ENCODE measurements at regions of chr1 and their contacts with region 1.

Region 1: DNA sequence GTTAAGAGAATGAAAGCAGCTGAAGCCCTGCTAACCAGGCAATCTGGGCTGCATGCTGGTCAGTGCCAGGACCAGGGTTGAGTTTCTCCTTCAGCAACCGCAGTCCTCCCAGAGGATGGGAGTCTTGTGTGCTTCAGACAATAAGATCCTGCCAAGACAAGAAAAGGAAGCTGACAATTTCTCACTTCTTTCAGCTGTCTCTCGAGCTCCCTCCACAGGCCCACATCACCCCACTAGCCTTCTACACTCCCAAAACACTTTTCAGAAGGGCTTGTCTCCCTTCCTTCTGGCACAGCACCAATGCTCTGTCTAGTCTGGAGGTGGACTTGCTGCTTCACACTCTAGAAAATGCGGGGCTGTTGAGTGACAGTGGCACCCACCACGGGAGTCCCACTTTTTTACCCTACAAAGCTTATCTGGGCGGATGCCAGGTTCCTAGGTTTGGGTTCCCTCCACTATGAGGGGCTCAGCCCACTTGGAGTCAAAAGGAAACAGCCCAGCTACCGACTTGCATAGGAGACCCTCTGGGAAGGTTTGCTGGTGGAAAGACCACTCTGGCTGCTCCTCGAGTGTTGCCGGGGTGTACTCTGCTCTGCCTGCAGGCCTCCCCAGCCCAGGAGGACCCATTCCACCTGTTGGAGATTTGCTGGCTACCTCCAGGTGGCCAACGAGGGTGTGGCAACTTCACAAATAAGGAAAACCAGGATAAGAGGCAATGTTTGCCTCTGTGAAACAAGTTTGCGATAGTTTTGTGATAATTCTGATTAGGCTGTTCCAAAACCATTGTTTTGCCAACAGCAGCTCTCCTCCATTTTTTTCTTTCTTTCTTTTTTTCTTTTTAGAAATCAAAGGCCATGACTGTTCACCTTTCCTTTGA is 68.9 kb downstream of the TENT5C start:
- ATAC-seq: peak in 3 of 8 experiments; percentile 8 to 73 (median 36)
- H3K4me3 ChIP-seq: no peak overlapping the region
- H3K27ac ChIP-seq: no peak overlapping the region
- H3K4me1 ChIP-seq: no peaks in the 10 kb centered on the region

Region 2: GRCh38 chr1:117527566-117528102 is 147.1 kb before region 1 on chr1:
- in situ Hi-C with region 1: loop called in 2 of 9 experiments (anchors 10 to 25 kb)
- ATAC-seq: peak in 2 of 8 experiments; percentile 23 to 46
- H3K4me3 ChIP-seq: no peak overlapping the region
- H3K27ac ChIP-seq: no peak overlapping the region
- H3K4me1 ChIP-seq: no peaks in the 10 kb centered on the region

Region 3: DNA sequence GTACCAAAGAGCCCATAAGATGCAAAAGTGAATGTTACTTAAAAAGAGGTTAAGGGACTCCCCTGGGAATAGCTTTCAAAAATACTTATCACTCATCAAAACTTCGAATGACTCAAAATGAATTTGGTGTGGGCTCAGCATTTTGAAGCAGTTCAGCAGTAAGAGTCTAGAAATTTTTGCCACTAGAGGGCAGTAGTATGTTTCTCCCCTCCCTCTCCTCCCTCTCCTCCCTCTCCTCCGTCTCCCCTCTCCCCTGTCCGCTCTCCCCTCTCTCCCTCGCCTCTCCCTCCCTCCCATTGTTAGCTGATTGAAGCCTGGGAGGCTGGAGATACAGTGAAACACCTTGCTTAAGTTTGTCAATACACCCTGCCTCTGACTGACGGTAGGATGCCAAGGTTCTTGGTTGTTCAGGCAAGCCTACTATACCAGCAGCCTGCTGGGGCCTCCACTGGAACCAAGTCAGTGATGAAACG is 139.7 kb before region 1 on chr1:
- in situ Hi-C with region 1: loop called in 1 of 9 experiments (anchors 25 kb)
- ATAC-seq: peak; percentile 38 to 98 (median 72)
- H3K4me3 ChIP-seq: no peak overlapping the region
- H3K27ac ChIP-seq: no peak overlapping the region
- H3K4me1 ChIP-seq: no peaks in the 10 kb centered on the region

Region 4: GRCh38 chr1:117740496-117740895 is 65.7 kb after region 1 on chr1:
- in situ Hi-C with region 1: no loop called
- ATAC-seq: peak in 3 of 8 experiments; percentile 16 to 81 (median 46)
- H3K4me3 ChIP-seq: no peak overlapping the region
- H3K27ac ChIP-seq: no peak overlapping the region
- H3K4me1 ChIP-seq: no peaks in the 10 kb centered on the region

Measured in motor neuron (in vitro differentiated cells).